Astrocyte of the cerebellum (primary cell): ENCODE measurements at regions of chr2 and their contacts with region 1.

Region 1: DNA sequence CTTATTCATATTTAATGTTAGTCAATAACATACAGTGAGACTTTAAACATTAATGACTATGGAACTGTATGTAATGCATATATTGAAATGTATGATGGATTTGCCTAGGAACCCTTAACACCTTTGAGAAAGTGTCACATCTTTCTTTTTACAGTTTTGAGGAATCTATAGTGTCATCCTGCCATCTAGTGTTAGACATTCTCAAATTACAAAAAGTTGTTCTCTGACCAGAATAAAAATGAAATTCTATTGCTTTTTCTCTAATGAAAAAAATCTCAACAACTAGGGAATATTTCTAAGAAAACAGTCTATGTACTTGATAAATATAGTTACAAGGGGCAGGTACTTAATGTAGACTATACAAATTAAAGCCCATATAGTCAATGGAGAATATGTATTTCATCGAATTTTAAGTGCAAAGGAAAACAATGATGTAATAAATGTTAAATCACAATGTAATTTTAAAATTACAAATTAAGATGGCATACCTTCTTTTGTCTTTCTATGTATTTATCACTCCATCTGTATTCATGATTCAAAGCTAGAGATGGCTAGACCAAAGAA is 5.1 kb upstream of the CALCRL start:
- DNase-seq: no peak
- H3K4me3 ChIP-seq: no peak overlapping the region
- CTCF ChIP-seq: no peak

Region 2: DNA sequence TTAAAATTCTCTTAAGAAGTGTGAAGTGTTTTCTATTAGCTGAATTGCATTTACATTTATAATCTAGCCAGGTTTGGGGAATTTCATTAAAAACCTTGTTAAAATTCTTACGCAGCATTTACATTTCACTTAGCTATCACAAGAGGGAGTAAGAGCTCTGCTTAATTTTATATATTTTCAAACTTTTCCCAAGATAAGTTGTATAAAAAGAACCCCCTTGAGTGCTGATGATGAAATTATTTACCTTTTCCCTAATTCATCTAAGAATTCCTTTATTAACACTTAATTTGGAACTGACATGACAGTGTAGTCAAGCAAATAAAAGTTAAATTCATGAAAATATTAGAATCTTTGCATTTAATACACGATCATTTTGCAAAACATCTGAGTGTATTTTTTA is 549.9 kb before region 1 on chr2:
- in situ Hi-C with region 1: loop called (anchors 5 kb)
- DNase-seq: no peak
- H3K4me3 ChIP-seq: no peak overlapping the region
- CTCF ChIP-seq: no peak

Region 3: DNA sequence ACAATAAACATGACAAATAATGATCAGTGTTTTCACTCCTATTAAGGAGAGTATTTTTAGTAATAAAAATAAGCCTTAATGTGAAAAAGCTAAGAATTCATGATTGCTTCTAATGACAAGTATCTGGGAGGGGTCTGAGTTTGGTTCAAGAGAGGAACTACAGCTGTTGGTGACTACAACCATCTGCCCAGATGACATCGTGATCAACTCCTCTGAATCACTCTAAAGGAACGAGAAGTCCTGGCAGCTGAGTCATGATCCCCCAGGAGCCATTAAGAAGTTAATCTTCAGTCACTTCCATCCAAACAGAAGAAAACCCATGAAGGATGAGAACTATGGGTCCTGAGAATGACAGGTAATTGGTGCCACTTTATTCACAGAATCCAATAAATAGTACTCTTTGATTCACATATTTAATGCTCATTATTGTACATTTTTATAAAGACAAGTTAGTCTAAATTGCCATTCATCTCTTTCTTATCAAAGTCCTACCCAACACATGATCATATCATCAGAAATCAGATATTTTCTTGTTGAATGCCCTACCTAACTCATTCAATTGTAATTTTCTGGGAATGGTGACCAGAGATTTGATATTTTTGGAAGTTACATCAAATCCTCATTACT is 94.3 kb after region 1 on chr2:
- in situ Hi-C with region 1: no loop called
- DNase-seq: peak; percentile 71
- H3K4me3 ChIP-seq: no peak overlapping the region
- CTCF ChIP-seq: no peak